Naive thymus-derived CD8-positive, alpha-beta T cell (primary cell): ENCODE measurements at regions of chr9 and their contacts with region 1.

Region 1: GRCh38 chr9:32384364-32385151 is at the start of gene ACO1:
- DNase-seq: peak; percentile 68 to 93 (median 84)
- ATAC-seq: peak; percentile 94
- H3K4me3 Mint-ChIP-seq: peak within 1 kb of the TSS; percentile 75 to 94 (median 88)
- H3K27ac Mint-ChIP-seq: peak within 1 kb of the TSS; percentile 24 to 83 (median 61)
- H3K4me1 Mint-ChIP-seq: peaks cover 5 to 31% (median 24%) of the 10 kb centered on the region in 4 donors
- H3K27me3 Mint-ChIP-seq: peaks cover 0 to 17% (median 5%) of the 10 kb centered on the region in 5 donors
- polyA plus RNA-seq, gene ACO1: 8.3 to 14.5 (median 13.1) TPM

Region 2: DNA sequence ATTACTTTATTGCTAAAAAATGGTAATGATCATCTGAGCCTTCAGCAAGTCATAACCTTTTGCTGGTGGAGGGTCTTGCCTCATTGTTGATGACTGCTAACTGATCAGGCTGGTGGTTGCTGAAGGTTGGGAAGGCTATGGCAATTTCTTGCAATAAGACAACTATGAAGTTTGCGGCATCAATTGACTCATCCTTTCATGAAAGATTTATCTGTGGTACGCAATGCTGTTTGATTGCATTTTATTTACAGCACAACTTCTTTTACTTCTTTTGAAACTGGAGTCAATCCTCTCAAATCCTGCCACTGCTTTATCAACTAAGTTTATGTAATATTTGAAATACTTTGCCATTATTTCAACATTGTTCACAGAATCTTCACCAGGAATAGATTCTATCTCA is 58.4 kb before region 1 on chr9:
- POLR2A ChIA-PET with region 1: no interaction called
- DNase-seq: no peak
- ATAC-seq: no peak
- H3K4me3 Mint-ChIP-seq: no peak overlapping the region
- H3K27ac Mint-ChIP-seq: no peak overlapping the region
- H3K4me1 Mint-ChIP-seq: no peaks in the 10 kb centered on the region
- H3K27me3 Mint-ChIP-seq: peaks cover 5 to 23% (median 12%) of the 10 kb centered on the region in 5 donors

Region 3: DNA sequence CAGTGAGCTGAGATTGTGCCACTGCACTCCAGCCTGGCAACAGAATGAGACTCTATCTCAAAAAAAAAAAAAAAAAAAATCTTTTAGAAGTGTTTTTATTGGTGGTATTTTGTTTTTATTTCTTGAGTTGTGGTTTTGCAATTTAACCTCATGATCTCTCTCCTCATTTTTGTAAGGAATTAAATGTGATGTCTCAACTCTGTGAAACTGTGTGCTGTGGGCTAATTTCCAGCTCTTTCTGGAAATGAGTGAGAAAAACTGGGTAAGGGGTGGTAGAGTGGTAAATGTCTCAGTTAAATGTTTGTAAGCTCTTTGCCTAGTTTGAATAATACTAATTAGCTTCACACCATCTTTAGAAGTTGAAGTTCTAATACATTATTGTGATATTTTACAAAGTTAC is 28.9 kb after region 1 on chr9:
- POLR2A ChIA-PET with region 1: no interaction called
- DNase-seq: no peak
- ATAC-seq: no peak
- H3K4me3 Mint-ChIP-seq: no peak overlapping the region
- H3K27ac Mint-ChIP-seq: no peak overlapping the region
- H3K4me1 Mint-ChIP-seq: no peaks in the 10 kb centered on the region
- H3K27me3 Mint-ChIP-seq: no peaks in the 10 kb centered on the region

Region 4: DNA sequence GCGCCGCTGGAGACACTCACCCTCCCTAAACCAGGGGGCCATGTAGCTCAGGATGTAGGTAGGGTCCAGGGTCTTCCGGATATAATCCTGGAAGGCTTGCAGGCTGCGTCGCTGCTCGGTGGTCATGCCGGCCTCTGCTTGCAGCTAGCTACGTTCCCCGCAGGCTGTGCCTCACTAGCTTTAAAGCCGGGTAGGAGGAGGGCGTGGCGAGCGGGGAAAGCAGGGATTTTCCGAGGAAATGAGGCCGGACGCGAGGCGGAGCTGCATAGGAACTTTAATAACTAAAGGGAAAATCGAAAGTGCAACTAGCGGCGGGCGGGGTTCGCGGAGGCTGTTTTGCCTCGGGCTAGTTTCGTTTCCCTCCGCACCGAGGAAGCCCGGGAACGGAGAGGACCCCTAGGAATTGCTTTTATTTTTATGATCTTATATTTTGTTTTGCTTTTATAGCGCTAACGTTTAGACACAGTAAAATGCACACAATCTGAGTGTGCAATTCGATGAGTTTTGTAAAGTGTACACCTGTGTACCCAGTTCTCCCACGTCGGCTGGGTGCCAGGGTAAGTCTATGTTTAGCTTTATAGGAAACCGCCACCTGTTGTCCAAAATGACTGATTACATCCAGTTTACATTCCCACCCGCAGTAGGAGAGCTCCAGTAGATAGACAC is 141.6 kb after region 1 on chr9 and contains the start of gene RIGI:
- POLR2A ChIA-PET with region 1: interaction called, 12 read pairs
- DNase-seq: peak; percentile 60 to 85 (median 78)
- ATAC-seq: peak; percentile 80 to 83
- H3K4me3 Mint-ChIP-seq: peak within 1 kb of the TSS; percentile 83 to 99 (median 96)
- H3K27ac Mint-ChIP-seq: peak within 1 kb of the TSS; percentile 94 to 99 (median 97)
- H3K4me1 Mint-ChIP-seq: peaks cover 15 to 56% (median 46%) of the 10 kb centered on the region in 4 donors
- H3K27me3 Mint-ChIP-seq: no peaks in the 10 kb centered on the region
- polyA plus RNA-seq, gene RIGI: 12.7 to 14.4 (median 14.1) TPM